Right cardiac atrium (tissue), 5 donors: ENCODE measurements at regions of chr19 and their contacts with region 1.

Region 1: DNA sequence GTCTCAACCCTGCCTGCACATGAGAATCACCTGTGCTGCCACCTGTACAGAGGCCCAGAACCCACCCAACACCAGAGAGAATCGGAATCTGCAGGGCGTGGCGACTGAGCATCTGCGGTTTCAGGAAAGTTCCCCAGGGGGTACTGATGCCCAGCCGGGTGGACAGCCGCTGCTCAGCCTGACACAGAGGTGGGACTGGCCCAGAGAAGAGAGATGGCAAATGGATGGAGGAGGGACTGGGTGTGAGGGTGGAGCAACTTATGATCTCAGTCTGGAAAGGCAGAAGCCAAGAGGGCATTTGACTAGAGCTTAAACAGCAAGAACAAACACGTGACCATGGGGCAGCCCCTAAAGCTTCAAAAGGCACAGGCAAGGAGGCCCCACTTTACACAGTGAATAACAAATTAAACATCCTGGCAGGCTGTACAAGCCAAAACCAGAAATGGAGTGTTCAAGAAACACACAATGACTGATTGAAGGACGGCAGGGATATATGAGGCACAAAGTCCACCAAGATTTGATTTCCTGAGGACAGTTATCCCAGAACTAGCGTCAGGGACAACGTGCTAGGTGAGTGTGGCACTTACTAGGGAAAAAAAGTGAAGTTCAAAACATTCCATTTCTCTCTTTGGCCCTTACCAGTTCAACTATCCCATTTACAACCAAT is 3.1 kb downstream of the RANBP3 start:
- DNase-seq: peak in 1 of 3 donors; percentile 17
- ATAC-seq: no peak
- H3K4me3 ChIP-seq: no peak overlapping the region
- H3K27ac ChIP-seq: no peak overlapping the region
- H3K4me1 ChIP-seq: peaks cover 12% of the 10 kb centered on the region
- H3K27me3 ChIP-seq: no peaks in the 10 kb centered on the region

Region 2: DNA sequence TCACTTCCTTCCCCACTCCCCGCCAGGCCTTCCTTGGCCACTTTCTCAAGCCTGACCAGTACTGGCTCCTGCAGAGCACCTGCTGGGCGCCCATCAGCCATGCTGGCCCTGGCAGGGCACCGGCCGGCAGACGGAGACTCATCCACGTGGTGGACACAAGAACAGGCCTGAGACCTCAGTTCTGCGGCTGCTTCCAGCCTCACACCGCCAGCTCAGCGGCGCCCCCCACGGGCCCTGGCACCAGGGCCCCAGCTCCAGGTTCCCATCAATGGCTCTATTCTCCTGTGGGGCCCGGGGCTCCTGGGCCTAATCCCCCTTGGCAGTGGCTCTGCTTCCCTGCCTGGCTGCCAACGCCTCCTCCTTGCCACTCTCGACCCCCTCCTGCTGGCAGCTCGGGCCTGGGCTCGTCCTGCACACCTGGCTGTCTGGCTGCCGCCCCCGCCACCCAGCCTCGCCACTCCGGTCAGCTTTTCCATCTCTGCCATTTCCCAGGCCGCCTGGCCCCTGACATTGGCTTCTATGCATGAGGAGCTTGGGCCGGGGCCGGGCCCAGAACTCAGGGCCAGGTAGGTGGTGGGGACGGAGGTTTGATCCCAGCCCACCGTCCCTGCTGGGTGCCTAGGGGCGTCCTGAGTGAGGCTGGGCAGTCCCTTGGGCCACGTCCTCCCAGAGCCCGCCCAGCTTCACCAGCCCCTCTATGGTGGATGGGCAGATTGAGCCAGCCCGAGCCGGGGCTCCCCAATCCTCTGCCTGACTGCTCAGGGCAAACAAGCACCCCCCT is 77.5 kb before region 1 on chr19:
- intact Hi-C with region 1: loop called in 1 of 4 experiments (anchors 5 kb)
- DNase-seq: peak in 2 of 3 donors; percentile 55 to 65
- ATAC-seq: no peak
- H3K4me3 ChIP-seq: no peak overlapping the region
- H3K27ac ChIP-seq: no peak overlapping the region
- H3K4me1 ChIP-seq: peaks cover under 1% of the 10 kb centered on the region
- H3K27me3 ChIP-seq: no peaks in the 10 kb centered on the region

Region 3: DNA sequence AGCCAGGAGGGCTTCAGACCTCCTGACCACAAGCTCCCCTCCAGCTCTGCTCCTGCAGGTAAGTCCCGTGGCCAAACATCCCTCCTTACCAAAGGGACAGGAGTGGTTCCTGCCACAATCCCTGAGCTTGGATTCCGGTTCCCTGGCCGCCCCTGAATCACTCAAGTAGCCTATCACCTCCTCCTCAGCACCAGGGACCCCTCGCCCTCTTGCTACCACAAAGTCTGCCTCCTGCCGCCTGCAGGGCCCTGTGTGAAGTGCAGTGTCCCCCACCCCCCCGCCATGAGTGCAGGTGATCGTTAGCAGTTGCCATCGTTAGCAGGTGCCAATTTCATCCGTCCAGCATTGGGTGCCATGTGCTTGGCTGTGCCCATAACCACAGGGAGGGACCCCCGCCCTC is 43.9 kb after region 1 on chr19:
- intact Hi-C with region 1: no loop called
- DNase-seq: no peak
- ATAC-seq: no peak
- H3K4me3 ChIP-seq: no peak overlapping the region
- H3K27ac ChIP-seq: no peak overlapping the region
- H3K4me1 ChIP-seq: no peaks in the 10 kb centered on the region
- H3K27me3 ChIP-seq: no peaks in the 10 kb centered on the region